ENCODE measurements at regions of chr11 and their contacts with region 1.

Region 1: DNA sequence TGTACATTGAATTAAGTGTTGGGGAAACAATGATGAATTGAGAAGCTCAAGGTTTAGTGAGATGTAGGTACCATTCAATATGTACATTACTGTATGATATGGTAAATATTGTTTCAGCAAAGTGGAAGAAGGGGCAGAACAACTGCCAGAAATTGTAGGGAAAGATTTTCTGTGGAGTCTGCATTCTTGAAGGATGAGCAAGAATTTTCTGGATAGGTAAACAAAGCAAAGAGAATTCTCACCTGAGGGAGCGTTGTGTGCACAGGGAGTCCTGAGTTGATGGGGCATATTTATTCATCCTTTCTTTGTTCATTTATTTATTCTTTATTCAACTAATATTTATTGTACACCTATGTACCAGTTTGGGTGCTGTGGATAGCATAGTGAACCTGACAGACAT is 83.2 kb downstream of the TMEM135 start:
- DNase-seq: no peak
- ATAC-seq: no peak
- H3K4me3 ChIP-seq: no peak overlapping the region
- H3K27ac ChIP-seq: no peak overlapping the region
- H3K4me1 ChIP-seq: peaks cover 6 to 20% of the 10 kb centered on the region in 2 donors
- H3K27me3 ChIP-seq: no peaks in the 10 kb centered on the region
- CTCF ChIP-seq: no peak
- POLR2A ChIP-seq: no peak

Region 2: GRCh38 chr11:86395061-86395551 is 725.8 kb before region 1 on chr11:
- in situ Hi-C with region 1: no loop called
- intact Hi-C with region 1: no loop called
- DNase-seq: peak in 1 of 2 donors; percentile 13
- ATAC-seq: peak in 1 of 2 donors; percentile 75
- H3K4me3 ChIP-seq: no peak overlapping the region
- H3K27ac ChIP-seq: peak overlapping the region in 1 of 4 donors; percentile 14
- H3K4me1 ChIP-seq: peaks cover 5 to 19% of the 10 kb centered on the region in 2 donors
- H3K27me3 ChIP-seq: no peaks in the 10 kb centered on the region
- CTCF ChIP-seq: no peak
- POLR2A ChIP-seq: no peak

Region 3: GRCh38 chr11:86978756-86979608 is 142.0 kb before region 1 on chr11:
- in situ Hi-C with region 1: no loop called
- intact Hi-C with region 1: loop called (anchors 5 kb)
- DNase-seq: no peak
- ATAC-seq: no peak
- H3K4me3 ChIP-seq: no peak overlapping the region
- H3K27ac ChIP-seq: peak overlapping the region; percentile 45 to 75 (median 64)
- H3K4me1 ChIP-seq: peaks cover 59 to 63% of the 10 kb centered on the region in 2 donors
- H3K27me3 ChIP-seq: no peaks in the 10 kb centered on the region
- CTCF ChIP-seq: peak in 4 of 5 experiments; percentile 36 to 55 (median 46)
- POLR2A ChIP-seq: no peak

Region 4: GRCh38 chr11:87097582-87097981 is 23.4 kb before region 1 on chr11:
- in situ Hi-C with region 1: no loop called
- intact Hi-C with region 1: loop called (anchors 1 kb)
- DNase-seq: no peak
- ATAC-seq: peak in 1 of 2 donors; percentile 55
- H3K4me3 ChIP-seq: no peak overlapping the region
- H3K27ac ChIP-seq: no peak overlapping the region
- H3K4me1 ChIP-seq: no peaks in the 10 kb centered on the region
- H3K27me3 ChIP-seq: no peaks in the 10 kb centered on the region
- CTCF ChIP-seq: peak in 3 of 5 experiments; percentile 4 to 52 (median 37)
- POLR2A ChIP-seq: no peak